Activated T-helper 1 cell treated with anti-CD3 and anti-CD28 coated beads, Interleukin-12 subunit alpha, Interleukin-12 subunit beta, Interleukin-2, Interleukin-4 antibody, amounts not matched to agents 30 ng/mL and 10 ng/mL and 1 ng/mL, durations not matched to agents 14 hours and 24 hours and 36 hours (primary cell): ENCODE measurements at regions of chr2 and their contacts with region 1.

Region 1: DNA sequence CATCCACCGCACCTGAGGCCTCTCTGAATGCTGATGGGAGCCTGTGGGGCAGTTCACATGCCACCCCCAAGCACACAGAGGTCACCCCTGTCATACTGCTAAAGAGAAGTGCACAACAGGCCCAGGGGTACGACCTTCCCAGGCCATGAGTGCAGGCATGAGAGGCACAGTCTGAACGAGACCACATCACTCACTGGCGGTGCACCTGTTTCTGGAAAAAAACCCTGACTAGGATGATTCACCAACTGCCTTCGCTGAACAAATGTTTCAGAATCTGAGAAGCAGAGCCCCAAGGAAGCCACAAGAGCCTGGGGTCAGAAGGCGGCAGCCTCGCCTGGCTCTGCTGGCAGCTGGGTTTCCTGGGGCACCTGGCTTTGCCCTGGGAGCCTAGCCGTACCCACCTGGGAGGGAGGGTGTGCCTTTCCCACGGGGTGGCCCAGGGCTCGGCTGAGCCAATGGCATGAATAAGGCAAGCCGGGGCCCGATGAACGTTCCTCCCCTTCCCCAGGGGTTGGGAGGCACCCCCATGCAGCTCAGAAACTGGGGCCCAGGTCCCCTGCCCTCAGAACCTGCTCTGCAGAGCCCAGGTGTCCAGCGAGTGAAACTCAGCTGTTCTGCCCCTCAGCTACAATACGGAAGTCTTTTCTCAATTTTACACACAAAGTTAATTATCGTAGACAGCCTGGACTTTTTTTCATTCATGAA is 73.8 kb downstream of the HDAC4 start:
- DNase-seq: peak; percentile 74
- H3K4me3 Mint-ChIP-seq: peak overlapping the region; percentile 61
- H3K27ac Mint-ChIP-seq: peak overlapping the region; percentile 94
- H3K4me1 Mint-ChIP-seq: peaks cover 83% of the 10 kb centered on the region
- H3K27me3 Mint-ChIP-seq: no peaks in the 10 kb centered on the region

Region 2: GRCh38 chr2:237931205-237931721 is 1395.7 kb before region 1 on chr2:
- intact Hi-C with region 1: loop called (anchors 5 kb)
- DNase-seq: no peak
- H3K4me3 Mint-ChIP-seq: no peak overlapping the region
- H3K27ac Mint-ChIP-seq: no peak overlapping the region
- H3K4me1 Mint-ChIP-seq: peaks cover 22% of the 10 kb centered on the region
- H3K27me3 Mint-ChIP-seq: no peaks in the 10 kb centered on the region

Region 3: GRCh38 chr2:239288951-239289511 is 38.0 kb before region 1 on chr2:
- intact Hi-C with region 1: loop called (anchors 1 kb)
- DNase-seq: peak; percentile 61
- H3K4me3 Mint-ChIP-seq: peak overlapping the region; percentile 77
- H3K27ac Mint-ChIP-seq: peak overlapping the region; percentile 98
- H3K4me1 Mint-ChIP-seq: peaks cover 78% of the 10 kb centered on the region
- H3K27me3 Mint-ChIP-seq: peaks cover 7% of the 10 kb centered on the region

Region 4: DNA sequence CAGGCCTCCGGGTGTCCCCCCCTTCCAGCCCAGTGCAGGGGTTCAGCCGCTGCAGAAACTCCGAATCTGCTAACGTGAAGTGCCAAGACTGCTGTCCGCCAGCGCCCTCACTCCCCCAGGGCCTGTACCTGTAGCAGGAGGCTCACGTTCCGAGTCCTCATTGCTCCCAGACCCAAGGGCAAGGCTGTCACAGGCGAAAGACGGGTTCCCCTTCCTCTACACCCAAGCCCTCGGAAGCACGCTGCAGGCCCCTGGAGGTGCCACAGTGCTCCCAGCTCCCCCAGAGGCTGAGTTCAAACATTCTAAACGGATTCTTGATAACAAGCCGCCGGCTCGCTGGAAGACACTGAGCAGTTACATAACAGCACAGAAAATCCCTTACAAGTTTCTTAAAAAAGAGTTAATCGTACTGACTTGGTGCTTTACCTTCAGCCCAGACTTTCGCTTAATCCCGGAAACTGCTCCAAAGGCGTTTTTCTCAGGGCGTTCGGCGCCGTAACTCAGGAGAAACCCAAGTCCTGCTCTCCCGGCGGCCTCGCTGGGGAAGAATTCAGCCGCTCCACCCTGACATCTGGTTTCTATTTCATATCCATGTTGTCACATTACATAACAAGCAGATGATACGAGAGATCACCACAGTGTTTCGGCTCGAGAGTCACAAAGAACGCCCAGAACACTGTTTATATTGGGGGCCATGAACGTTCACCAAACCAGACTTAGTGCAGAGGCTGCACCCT is 18.2 kb before region 1 on chr2:
- intact Hi-C with region 1: no loop called
- DNase-seq: no peak
- H3K4me3 Mint-ChIP-seq: no peak overlapping the region
- H3K27ac Mint-ChIP-seq: no peak overlapping the region
- H3K4me1 Mint-ChIP-seq: peaks cover 12% of the 10 kb centered on the region
- H3K27me3 Mint-ChIP-seq: no peaks in the 10 kb centered on the region

Region 5: GRCh38 chr2:239339726-239340601 is 13.0 kb after region 1 on chr2:
- intact Hi-C with region 1: loop called (anchors 2 kb)
- DNase-seq: peak; percentile 28
- H3K4me3 Mint-ChIP-seq: peak overlapping the region; percentile 63
- H3K27ac Mint-ChIP-seq: peak overlapping the region; percentile 77
- H3K4me1 Mint-ChIP-seq: peaks cover 55% of the 10 kb centered on the region
- H3K27me3 Mint-ChIP-seq: no peaks in the 10 kb centered on the region

Region 6: DNA sequence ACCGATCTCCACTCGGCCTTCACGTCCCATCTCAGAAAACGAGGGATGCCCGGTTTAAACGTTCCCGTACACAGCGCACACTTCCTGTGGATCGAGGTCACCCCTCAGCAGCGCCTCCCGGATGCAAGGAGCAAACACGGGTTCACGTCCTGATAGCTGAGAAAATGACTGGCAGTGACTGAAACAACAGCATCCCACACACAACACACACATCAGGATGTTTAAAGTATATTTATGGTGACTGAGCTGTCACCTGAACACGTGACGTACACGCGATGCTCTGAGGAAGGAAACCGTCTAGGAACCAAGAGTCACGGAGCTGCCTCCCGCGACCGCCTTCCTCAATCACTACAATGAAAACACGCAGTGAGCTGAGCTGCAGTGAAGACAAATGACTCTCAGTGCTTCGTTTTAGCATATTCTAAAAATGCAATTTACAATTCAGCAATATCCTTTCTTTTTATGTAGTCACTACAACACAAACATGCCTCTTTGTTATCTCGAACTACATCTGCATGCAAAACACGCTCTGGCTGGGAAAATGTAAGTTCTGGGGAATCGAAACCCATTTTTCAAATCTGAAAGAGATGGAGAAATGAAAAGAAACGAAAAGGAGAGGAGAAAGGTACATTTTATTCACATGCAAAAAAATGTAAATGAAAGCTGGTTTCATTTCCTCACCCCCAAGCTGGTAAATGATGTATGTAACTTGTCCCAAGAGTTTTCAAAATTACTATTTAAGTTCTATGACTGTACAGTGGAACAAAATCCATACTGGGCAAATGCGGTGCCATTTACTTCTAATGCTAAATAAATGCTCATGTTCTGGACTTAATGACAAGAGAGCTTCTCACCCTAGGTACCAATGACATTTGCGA is 54.1 kb after region 1 on chr2:
- intact Hi-C with region 1: loop called (anchors 1 kb)
- DNase-seq: peak; percentile 64
- H3K4me3 Mint-ChIP-seq: peak overlapping the region; percentile 83
- H3K27ac Mint-ChIP-seq: peak overlapping the region; percentile 94
- H3K4me1 Mint-ChIP-seq: peaks cover 38% of the 10 kb centered on the region
- H3K27me3 Mint-ChIP-seq: peaks cover 2% of the 10 kb centered on the region